Cardiac septum (tissue), 1 donor: ENCODE measurements at regions of chr19 and their contacts with region 1.

Region 1: GRCh38 chr19:8657869-8658268 is 27.4 kb downstream of the NFILZ start:
- DNase-seq: peak; percentile 68

Region 2: GRCh38 chr19:8592231-8593009 is 65.4 kb before region 1 on chr19:
- intact Hi-C with region 1: no loop called
- DNase-seq: peak; percentile 96

Region 3: DNA sequence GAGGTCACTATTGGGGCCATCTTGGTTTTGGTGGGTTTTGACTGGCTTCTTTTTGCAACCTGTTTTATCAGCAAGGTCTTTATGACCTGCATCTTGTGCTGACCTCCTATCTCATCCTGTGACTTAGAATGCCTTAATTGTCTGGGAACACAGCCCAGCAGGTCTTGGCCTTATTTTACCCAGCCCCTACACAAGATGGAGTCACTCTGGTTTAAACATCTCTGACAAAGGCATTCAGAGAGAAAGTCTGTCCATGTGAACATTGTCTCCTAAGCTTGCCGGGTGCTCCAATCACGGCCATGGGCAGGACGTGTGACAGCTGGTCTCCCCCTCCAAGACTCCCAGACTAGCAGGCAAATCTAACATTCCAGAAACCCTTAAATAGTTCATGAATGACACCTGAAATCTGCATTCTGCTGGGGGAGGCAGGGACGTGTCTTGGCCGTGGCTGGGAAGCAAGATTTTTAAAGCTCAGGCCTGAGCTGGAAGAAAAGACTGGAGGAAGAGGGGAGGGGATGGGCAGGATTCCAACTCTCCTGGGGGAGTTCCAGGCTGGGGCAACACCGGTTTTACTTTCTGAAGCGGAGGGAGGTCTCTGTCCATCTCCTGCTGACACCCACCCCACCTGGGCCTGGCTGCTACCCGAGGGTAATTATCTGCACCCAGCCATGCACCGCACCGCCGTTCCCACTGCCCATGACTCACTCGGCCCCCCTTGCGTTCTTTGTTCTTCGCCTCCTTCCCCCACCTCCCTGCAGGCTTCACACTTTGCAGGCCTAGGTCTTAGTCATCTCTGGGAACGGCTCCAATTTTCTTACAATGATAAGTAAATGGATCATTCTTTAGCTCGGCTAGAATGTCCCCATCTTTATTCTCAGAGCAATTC is 417.4 kb after region 1 on chr19:
- intact Hi-C with region 1: loop called (anchors 2 kb)
- DNase-seq: peak; percentile 78